B cell (primary cell): ENCODE measurements at regions of chr5 and their contacts with region 1.

Region 1: DNA sequence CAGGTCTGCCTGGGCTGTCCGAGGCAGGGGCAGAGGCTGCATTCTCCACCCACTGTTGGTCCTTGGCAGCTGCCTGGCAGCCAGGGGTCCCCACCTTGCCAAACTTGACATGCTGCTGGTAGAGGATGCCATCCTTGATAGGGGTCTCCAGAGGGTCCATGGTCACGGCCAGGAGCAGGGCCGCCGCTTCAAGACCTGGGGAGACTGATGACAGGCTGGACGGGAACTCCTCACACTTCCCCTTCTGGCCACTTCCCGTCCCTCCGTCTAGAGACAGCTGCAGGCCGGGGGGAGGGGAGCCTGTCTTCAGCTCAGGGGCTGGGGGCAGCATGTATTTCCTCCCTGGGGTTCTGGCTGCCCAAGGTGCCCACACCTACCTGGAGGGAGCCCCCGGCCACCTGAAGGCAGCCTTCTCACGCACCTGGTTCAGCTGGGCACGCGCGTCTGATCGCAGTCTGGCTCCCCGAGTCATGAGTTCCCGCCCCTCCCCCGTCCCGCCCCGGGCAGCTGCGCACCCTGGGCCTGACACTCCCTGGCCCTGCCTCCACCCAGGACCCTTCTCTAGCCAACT is at the start of gene DOK3:
- DNase-seq: peak; percentile 81
- ATAC-seq: peak; percentile 39
- H3K4me3 ChIP-seq: peak within 1 kb of the TSS; percentile 57 to 95 (median 75)
- H3K4me3 Mint-ChIP-seq: peak within 1 kb of the TSS; percentile 94
- H3K27ac ChIP-seq: peak within 1 kb of the TSS; percentile 91 to 96
- H3K27ac Mint-ChIP-seq: peak within 1 kb of the TSS; percentile 98
- H3K4me1 ChIP-seq: peaks cover 38 to 53% of the 10 kb centered on the region in 2 donors
- H3K4me1 Mint-ChIP-seq: peaks cover 55% of the 10 kb centered on the region
- H3K27me3 ChIP-seq: no peaks in the 10 kb centered on the region
- H3K27me3 Mint-ChIP-seq: no peaks in the 10 kb centered on the region
- CTCF ChIP-seq: no peak
- total RNA-seq, gene DOK3: 113 and 115 TPM in 2 replicates

Region 2: GRCh38 chr5:177592010-177592834 is 82.8 kb after region 1 on chr5 and contains the start of gene TMED9:
- CTCF ChIA-PET with region 1: interaction called, 5 read pairs
- POLR2A ChIA-PET with region 1: no interaction called
- intact Hi-C with region 1: loop called (anchors 2 kb)
- DNase-seq: peak; percentile 90
- ATAC-seq: peak; percentile 98
- H3K4me3 ChIP-seq: peak within 1 kb of the TSS; percentile 63 to 91 (median 88)
- H3K4me3 Mint-ChIP-seq: peak within 1 kb of the TSS; percentile 99
- H3K27ac ChIP-seq: peak within 1 kb of the TSS; percentile 62 to 82
- H3K27ac Mint-ChIP-seq: peak within 1 kb of the TSS; percentile 97
- H3K4me1 ChIP-seq: peaks cover 12 to 18% of the 10 kb centered on the region in 2 donors
- H3K4me1 Mint-ChIP-seq: peaks cover 19% of the 10 kb centered on the region
- H3K27me3 ChIP-seq: no peaks in the 10 kb centered on the region
- H3K27me3 Mint-ChIP-seq: peaks cover 5% of the 10 kb centered on the region
- CTCF ChIP-seq: no peak
- total RNA-seq, gene TMED9: 63.1 and 67.6 TPM in 2 replicates